Calu3 (cell line): ENCODE measurements at regions of chr4 and their contacts with region 1.

Region 1: DNA sequence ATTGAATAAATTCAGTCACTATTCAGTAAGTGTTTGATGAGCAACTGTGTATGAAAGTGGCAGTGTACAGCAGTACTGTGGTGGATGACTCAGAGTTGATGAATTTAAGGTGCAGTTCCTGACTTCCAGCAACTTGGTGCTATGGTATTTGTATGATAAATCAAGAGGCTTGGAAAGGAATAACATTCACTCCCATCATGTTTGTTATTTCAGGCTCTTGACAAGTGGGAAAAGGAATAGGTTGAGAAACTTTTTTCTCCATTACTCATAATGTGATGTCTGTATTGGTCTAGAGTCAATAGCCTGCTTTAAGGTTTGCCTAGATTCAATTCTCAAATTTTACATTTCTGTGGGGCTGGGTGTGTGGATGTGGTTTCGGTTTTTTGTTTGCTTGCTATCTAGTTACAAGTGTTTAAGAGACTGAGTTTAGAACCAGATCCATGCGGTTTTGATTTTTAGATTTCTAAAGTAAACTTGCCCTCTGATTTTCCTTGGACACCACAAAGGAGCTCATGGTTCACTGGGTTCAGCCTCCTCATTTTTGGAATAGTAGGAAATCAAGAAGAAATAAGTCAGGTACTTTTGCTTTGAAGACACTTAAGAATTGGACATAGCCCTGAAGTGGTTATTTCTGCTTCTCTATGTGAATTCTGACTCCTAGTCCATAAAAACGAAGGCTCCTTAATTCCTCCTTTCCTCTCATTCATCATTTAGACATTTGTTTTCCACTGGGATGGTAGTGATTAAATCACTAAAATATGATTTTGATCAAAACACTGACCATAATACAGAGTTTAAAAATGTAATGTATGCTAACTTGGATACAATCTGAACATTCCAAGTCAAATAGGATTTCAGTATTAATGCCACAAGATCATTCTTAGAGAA is 34.9 kb upstream of the CYP2U1 start:
- DNase-seq: peak; percentile 52
- H3K4me3 Mint-ChIP-seq: peak overlapping the region; percentile 43
- H3K27ac Mint-ChIP-seq: peak overlapping the region; percentile 91
- H3K4me1 Mint-ChIP-seq: peaks cover 39% of the 10 kb centered on the region
- H3K27me3 Mint-ChIP-seq: no peaks in the 10 kb centered on the region
- CTCF ChIP-seq: no peak

Region 2: DNA sequence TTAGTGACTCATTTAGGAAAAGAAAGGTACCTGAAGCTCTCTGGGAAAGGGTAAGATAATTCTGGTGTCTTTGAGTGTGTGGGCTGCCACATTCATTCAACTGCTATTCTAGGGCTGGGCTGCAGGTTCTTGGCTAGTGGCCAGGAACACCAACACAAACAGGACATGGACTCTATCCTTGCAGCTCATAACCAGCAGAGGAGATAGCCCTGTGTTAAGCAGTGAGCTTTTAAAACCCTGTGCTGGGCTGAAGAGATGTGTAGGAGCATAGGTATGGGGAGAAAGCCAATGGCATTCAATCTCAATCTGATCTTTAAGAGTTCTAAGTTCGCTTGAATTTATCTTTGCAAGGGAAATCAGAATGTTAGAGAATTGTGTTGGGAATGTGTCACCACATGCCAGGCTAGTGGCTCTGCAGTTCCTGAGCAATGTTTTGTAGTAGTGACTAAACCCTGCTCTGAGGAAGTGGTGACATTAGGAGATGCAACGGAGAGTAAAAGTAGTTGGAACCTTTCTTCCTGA is 32.5 kb before region 1 on chr4:
- CTCF ChIA-PET with region 1: no interaction called
- intact Hi-C with region 1: loop called (anchors 5 kb)
- DNase-seq: peak; percentile 45
- H3K4me3 Mint-ChIP-seq: no peak overlapping the region
- H3K27ac Mint-ChIP-seq: peak overlapping the region; percentile 98
- H3K4me1 Mint-ChIP-seq: peaks cover 25% of the 10 kb centered on the region
- H3K27me3 Mint-ChIP-seq: no peaks in the 10 kb centered on the region
- CTCF ChIP-seq: no peak